Mammary epithelial cell (primary cell): ENCODE measurements at regions of chr16 and their contacts with region 1.

Region 1: GRCh38 chr16:24253192-24253591 is 2.9 kb upstream of the CACNG3 start:
- DNase-seq: peak; percentile 32
- H3K4me3 ChIP-seq: no peak overlapping the region
- H3K27ac ChIP-seq: no peak overlapping the region
- H3K4me1 ChIP-seq: no peaks in the 10 kb centered on the region
- H3K27me3 ChIP-seq: no peaks in the 10 kb centered on the region
- CTCF ChIP-seq: peak; percentile 56 to 70

Region 2: DNA sequence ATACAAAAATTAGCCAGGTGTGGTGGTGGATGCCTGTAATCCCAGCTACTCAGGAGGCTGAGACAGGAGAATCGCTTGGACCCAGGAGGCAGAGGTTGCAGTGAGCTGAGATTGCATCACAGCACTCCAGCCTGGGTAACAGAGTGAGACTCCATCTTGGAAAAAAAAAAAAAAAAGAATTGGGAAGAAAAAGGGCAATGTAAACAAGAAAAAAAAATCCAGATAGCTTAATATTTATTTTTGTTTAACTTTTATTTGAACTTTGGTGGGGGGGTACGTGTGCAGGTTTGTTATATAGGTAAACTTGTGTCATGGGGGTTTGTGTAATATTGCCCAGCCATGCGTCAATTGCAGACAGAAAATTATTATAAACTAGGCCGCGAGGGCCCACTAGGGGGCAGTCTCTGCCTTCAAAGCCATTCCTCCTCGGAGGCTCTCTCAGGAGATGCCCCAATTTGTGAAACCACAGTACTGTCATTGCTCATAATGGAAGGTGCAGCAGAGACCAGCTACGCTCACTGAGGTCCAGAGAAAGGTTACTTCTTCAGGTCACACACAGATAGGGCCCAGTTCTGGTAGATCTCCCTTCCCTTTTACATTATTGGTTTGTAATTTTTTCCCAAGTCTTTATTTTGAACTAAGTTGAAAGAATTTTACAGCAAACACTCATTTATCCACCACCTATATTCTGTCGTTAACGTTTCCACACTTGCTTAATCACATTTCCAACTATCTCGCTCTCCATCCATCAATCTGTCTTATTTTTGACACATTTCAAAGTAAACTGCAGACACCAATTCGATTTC is 211.2 kb before region 1 on chr16:
- CTCF ChIA-PET with region 1: no interaction called
- dilution Hi-C with region 1: no loop called
- in situ Hi-C with region 1: no loop called
- intact Hi-C with region 1: loop called (anchors 1 kb)
- DNase-seq: peak; percentile 44
- H3K4me3 ChIP-seq: no peak overlapping the region
- H3K27ac ChIP-seq: no peak overlapping the region
- H3K4me1 ChIP-seq: no peaks in the 10 kb centered on the region
- H3K27me3 ChIP-seq: no peaks in the 10 kb centered on the region
- CTCF ChIP-seq: peak; percentile 69 to 87

Region 3: GRCh38 chr16:24070851-24071250 is 182.3 kb before region 1 on chr16:
- CTCF ChIA-PET with region 1: interaction called, 7 read pairs
- dilution Hi-C with region 1: no loop called
- in situ Hi-C with region 1: no loop called
- intact Hi-C with region 1: loop called (anchors 10 kb)
- DNase-seq: peak; percentile 20
- H3K4me3 ChIP-seq: no peak overlapping the region
- H3K27ac ChIP-seq: no peak overlapping the region
- H3K4me1 ChIP-seq: no peaks in the 10 kb centered on the region
- H3K27me3 ChIP-seq: no peaks in the 10 kb centered on the region
- CTCF ChIP-seq: peak; percentile 8 to 55

Region 4: GRCh38 chr16:25135254-25135878 is 882.2 kb after region 1 on chr16:
- CTCF ChIA-PET with region 1: interaction called, 16 read pairs
- dilution Hi-C with region 1: no loop called
- in situ Hi-C with region 1: no loop called
- intact Hi-C with region 1: no loop called
- DNase-seq: peak; percentile 48
- H3K4me3 ChIP-seq: no peak overlapping the region
- H3K27ac ChIP-seq: no peak overlapping the region
- H3K4me1 ChIP-seq: no peaks in the 10 kb centered on the region
- H3K27me3 ChIP-seq: no peaks in the 10 kb centered on the region
- CTCF ChIP-seq: peak; percentile 16 to 39